Esophagus squamous epithelium (tissue), 5 donors: ENCODE measurements at regions of chr2 and their contacts with region 1.

Region 1: GRCh38 chr2:231674587-231675338 is 33.6 kb upstream of the PTMA start:
- DNase-seq: no peak
- H3K4me3 ChIP-seq: no peak overlapping the region
- H3K27ac ChIP-seq: peak overlapping the region; percentile 78 to 91 (median 90)
- H3K4me1 ChIP-seq: peaks cover 35 to 71% (median 52%) of the 10 kb centered on the region in 3 donors
- H3K27me3 ChIP-seq: no peaks in the 10 kb centered on the region
- CTCF ChIP-seq: peak; percentile 66 to 84 (median 80)
- POLR2A ChIP-seq: no peak

Region 2: GRCh38 chr2:231612179-231613053 is 62.3 kb before region 1 on chr2:
- intact Hi-C with region 1: loop called (anchors 5 kb)
- DNase-seq: peak; percentile 68
- H3K4me3 ChIP-seq: peak overlapping the region in 1 of 4 donors; percentile 70
- H3K27ac ChIP-seq: peak overlapping the region; percentile 90 to 98 (median 94)
- H3K4me1 ChIP-seq: peaks cover 42 to 65% (median 43%) of the 10 kb centered on the region in 3 donors
- H3K27me3 ChIP-seq: no peaks in the 10 kb centered on the region
- CTCF ChIP-seq: peak; percentile 94 to 99 (median 98)
- POLR2A ChIP-seq: peak in 1 of 4 donors; percentile 11

Region 3: DNA sequence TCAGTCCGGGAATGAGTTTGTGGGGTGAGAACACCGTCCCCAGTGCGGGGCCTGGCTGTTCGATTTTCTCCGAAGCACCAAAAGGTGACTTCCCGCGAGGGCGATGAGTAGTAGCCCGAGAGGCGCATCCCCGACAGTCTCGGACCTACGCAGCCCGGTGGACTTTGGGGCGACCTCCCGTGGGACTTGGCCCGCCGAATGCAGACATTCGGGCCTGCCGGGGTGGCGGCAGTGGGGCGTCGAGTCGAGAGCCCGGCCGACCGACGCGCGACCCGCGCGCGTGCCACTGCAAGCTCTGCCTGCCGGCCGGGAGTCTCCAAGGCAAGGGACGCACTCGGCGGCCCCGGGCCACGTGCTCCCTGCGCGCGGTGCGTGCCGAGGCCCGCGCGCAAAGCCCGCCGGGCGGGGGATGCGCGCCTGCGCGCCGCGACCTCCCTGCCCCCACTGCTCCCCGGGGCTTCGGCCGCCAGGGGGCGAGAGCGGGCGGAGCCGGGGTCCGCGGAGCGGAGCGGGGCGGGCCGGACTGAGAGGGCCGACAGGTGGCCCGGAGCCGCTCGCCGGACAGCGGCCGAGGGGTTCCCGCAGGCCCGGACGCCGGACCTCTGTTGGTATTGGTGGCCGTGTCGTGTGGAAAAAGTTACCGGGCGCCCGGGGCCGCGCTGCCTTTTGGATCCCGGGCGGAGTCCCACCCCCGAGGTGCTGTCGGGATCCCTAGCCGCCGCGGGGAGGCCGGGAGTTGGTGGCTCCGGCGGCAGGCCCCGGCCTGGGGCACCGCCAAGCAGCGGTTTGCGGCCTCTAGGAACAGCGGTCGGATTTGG is 35.4 kb after region 1 on chr2:
- intact Hi-C with region 1: loop called (anchors 2 kb)
- DNase-seq: no peak
- H3K4me3 ChIP-seq: peak overlapping the region; percentile 59 to 95 (median 92)
- H3K27ac ChIP-seq: peak overlapping the region; percentile 94 to 100 (median 99)
- H3K4me1 ChIP-seq: peaks cover 39 to 70% (median 41%) of the 10 kb centered on the region in 3 donors
- H3K27me3 ChIP-seq: no peaks in the 10 kb centered on the region
- CTCF ChIP-seq: peak; percentile 52 to 100 (median 98)
- POLR2A ChIP-seq: peak in 3 of 4 donors; percentile 12 to 89 (median 87)

Region 4: DNA sequence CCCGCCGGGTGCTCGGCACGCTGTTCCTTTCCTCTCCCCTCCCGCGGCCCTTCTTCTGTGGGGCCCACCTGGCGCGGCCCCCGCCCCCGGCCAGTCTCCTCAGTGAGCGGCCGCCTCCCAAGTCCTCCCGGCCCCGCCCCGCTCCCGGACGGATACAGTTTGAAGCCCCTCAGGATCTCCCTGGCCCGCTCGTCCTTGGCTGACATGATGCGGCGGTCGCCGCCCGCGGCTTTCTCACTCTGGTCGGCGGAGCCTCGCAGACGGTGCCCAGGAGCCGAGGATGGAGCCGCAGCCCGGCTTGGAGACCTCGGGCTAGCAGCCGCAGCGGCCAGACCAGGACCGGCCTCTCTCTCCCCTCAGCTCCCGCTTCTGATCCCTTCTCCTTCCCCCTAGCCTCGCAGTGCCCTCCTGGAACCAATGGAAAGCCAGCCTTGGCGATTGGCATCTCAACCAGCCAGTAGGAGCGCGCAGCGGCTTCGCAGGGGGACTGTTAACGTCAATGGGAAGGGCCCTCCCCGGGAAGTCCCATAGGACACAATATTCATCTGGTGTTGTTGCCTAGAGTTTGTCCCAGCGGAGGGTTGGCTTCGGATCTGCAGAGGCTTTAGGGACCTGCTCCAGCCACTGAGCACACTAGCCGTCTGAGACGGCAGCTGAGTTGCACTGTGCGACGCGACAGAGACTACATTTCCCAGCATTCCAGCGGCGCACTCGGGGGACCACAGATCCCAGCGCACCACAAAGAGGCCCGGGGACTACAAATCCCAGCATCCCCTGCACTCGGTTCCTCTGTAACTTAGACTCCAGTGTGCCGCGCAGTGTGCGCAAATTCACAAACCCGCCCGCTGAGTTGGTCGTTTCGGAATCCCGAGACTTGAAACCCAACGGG is 106.4 kb after region 1 on chr2 and contains the start of gene PDE6D:
- intact Hi-C with region 1: loop called (anchors 10 kb)
- DNase-seq: peak; percentile 94
- H3K4me3 ChIP-seq: peak within 1 kb of the TSS; percentile 69 to 83 (median 73)
- H3K27ac ChIP-seq: peak within 1 kb of the TSS; percentile 85 to 91 (median 89)
- H3K4me1 ChIP-seq: peaks cover 21 to 57% (median 34%) of the 10 kb centered on the region in 3 donors
- H3K27me3 ChIP-seq: no peaks in the 10 kb centered on the region
- CTCF ChIP-seq: peak in 2 of 6 experiments; percentile 5 to 24
- POLR2A ChIP-seq: peak in 3 of 4 donors; percentile 84 to 95 (median 93)
- total RNA-seq, gene PDE6D: 13.5 to 24.0 (median 16.1) TPM

Region 5: GRCh38 chr2:232113821-232114220 is 439.1 kb after region 1 on chr2:
- intact Hi-C with region 1: no loop called
- DNase-seq: no peak
- H3K4me3 ChIP-seq: no peak overlapping the region
- H3K27ac ChIP-seq: no peak overlapping the region
- H3K4me1 ChIP-seq: no peaks in the 10 kb centered on the region
- H3K27me3 ChIP-seq: no peaks in the 10 kb centered on the region
- CTCF ChIP-seq: no peak
- POLR2A ChIP-seq: no peak